ENCODE measurements at regions of chr12 and their contacts with region 1.

Region 1: GRCh38 chr12:57069523-57069922 is 9.1 kb downstream of the NEMP1 start:
- DNase-seq: no peak
- H3K4me3 ChIP-seq: no peak overlapping the region
- H3K27ac ChIP-seq: peak overlapping the region; percentile 75 to 82 (median 78)
- H3K4me1 ChIP-seq: peaks cover 0 to 31% (median 28%) of the 10 kb centered on the region in 4 donors
- H3K27me3 ChIP-seq: no peaks in the 10 kb centered on the region
- CTCF ChIP-seq: peak; percentile 93 to 96 (median 93)
- EP300 ChIP-seq: no peak
- POLR2A ChIP-seq: no peak

Region 2: DNA sequence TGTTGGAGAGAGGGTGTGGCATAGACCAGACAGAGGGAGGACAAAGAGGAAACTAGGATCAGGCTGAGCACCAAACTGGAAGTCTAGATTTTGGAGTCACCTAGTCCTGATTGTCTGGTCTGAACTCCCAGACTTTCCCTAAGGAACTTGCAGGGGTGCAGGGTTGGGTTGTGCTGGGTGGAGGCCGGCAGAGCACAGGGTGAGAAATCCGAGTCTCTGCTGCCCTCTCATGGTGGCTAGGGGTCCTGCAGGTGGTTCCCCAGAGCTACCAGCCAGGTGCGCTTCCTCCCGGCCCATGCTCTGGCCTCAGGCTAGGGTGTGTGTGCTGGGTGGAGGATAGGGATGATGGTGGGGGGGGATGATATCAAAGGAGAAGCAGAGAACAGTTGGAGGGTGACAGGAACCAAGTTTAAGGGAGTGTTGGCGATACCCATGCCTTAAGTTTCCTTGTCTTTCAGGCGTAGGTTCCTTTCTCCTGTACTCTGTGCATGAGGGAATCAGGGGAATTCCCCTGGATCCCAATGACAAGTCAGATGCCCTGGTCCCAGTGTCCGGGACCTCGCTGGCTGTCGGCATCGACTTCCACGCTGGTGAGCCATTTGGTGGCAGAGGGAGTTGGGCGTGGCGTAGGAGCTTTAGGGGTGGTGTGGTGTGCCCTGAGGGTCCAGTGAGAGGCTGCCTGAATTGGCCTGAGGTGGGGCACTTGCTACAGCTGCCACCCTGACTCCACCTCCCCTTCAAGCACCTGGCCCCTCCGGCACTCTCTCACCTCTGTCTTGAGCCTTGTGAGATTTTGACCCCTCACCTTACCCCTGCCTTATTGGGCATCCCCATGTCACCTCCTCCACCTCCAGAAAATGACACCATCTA is 113.6 kb after region 1 on chr12:
- intact Hi-C with region 1: loop called (anchors 2 kb)
- DNase-seq: no peak
- H3K4me3 ChIP-seq: no peak overlapping the region
- H3K27ac ChIP-seq: no peak overlapping the region
- H3K4me1 ChIP-seq: no peaks in the 10 kb centered on the region
- H3K27me3 ChIP-seq: no peaks in the 10 kb centered on the region
- CTCF ChIP-seq: peak; percentile 82 to 93 (median 90)
- EP300 ChIP-seq: no peak
- POLR2A ChIP-seq: no peak

Measured in esophagus muscularis mucosa (tissue), 4 donors.